SK-N-SH (cell line): ENCODE measurements at regions of chr11 and their contacts with region 1.

Region 1: DNA sequence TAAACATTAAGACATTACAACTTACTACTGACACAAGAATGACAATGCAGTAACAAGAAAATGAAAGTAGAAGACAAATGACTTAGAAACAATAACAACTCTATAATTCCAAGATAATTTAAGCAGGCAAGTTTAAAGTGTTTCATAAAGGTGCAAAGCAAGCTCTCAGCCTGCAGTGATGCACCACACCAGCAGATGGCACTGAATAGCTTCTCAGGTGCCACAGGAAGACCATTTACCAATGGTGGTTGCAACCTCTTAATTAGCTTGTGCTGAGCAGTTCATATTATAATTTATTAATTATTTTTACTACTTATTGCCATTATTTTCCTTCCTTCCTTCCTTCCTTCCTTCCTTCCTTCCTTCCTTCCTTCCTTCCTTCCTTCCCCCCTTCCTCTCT is 60.6 kb downstream of the NXPE2 start:
- DNase-seq: peak; percentile 44
- H3K4me3 ChIP-seq: no peak overlapping the region
- H3K27ac ChIP-seq: no peak overlapping the region
- H3K4me1 ChIP-seq: no peaks in the 10 kb centered on the region
- H3K27me3 ChIP-seq: no peaks in the 10 kb centered on the region
- CTCF ChIP-seq: peak; percentile 71
- EP300 ChIP-seq: no peak
- RAD21 ChIP-seq: peak; percentile 85

Region 2: GRCh38 chr11:114610984-114611944 is 127.7 kb before region 1 on chr11:
- CTCF ChIA-PET with region 1: no interaction called
- POLR2A ChIA-PET with region 1: no interaction called
- DNase-seq: no peak
- H3K4me3 ChIP-seq: no peak overlapping the region
- H3K27ac ChIP-seq: no peak overlapping the region
- H3K4me1 ChIP-seq: no peaks in the 10 kb centered on the region
- H3K27me3 ChIP-seq: no peaks in the 10 kb centered on the region
- CTCF ChIP-seq: peak; percentile 27; the same call in 1 of the 2 replicates
- EP300 ChIP-seq: no peak
- RAD21 ChIP-seq: no peak

Region 3: DNA sequence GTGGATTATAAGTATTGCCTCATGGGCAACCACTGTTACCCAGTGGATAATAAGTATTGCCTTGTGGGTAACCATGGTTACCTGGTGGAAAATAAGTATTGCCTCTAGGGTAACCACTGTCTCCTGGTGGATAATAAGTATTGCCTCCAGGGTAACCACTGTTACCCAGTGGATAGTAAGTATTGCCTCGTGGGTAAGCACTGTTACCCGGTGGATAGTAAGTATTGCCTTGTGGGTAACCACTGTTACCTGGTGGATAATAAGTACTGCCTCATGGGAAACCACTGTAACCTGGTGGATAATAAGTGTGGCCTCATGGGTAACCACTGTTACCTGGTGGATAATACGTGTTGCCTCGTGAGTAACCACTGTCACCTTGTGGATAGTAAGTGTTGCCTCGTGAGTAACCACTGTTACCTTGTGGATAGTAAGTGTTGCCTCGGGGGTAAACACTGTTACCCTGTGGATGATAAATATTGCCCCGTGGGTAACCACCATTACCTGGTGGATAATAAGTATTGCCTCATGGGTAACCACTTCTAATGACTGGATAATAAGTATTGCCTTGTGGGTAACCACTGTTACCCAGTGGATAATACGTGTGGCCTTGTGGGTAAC is 114.3 kb before region 1 on chr11:
- CTCF ChIA-PET with region 1: no interaction called
- POLR2A ChIA-PET with region 1: no interaction called
- DNase-seq: no peak
- H3K4me3 ChIP-seq: no peak overlapping the region
- H3K27ac ChIP-seq: no peak overlapping the region
- H3K4me1 ChIP-seq: no peaks in the 10 kb centered on the region
- H3K27me3 ChIP-seq: no peaks in the 10 kb centered on the region
- CTCF ChIP-seq: no peak
- EP300 ChIP-seq: no peak
- RAD21 ChIP-seq: no peak

Region 4: GRCh38 chr11:114713756-114714155 is 25.2 kb before region 1 on chr11:
- CTCF ChIA-PET with region 1: interaction called, 13 read pairs
- POLR2A ChIA-PET with region 1: no interaction called
- DNase-seq: no peak
- H3K4me3 ChIP-seq: no peak overlapping the region
- H3K27ac ChIP-seq: no peak overlapping the region
- H3K4me1 ChIP-seq: no peaks in the 10 kb centered on the region
- H3K27me3 ChIP-seq: no peaks in the 10 kb centered on the region
- CTCF ChIP-seq: no peak
- EP300 ChIP-seq: no peak
- RAD21 ChIP-seq: no peak

Region 5: DNA sequence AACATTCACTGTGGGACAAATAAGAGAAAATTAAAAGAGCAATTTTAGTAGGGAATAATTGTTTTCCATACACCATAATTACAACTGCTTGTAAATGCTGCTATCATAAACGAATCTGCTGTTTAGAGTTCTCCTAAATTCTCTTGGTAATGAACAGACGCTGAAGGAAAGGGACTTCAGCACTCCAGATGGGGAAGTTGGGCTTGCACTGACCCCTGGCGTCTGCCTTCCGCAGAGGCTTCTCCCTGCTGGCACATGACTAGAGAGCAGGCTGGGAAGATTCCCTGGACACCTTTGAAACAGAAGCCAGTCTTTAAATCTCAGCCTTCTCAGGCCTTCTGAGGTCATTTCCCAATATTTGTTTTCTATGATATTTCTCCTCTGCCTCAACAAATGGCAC is 23.5 kb after region 1 on chr11:
- CTCF ChIA-PET with region 1: interaction called, 13 read pairs
- POLR2A ChIA-PET with region 1: no interaction called
- DNase-seq: peak; percentile 77
- H3K4me3 ChIP-seq: no peak overlapping the region; a peak in 1 of 4 replicates
- H3K27ac ChIP-seq: no peak overlapping the region
- H3K4me1 ChIP-seq: peaks cover 0 to 4% of the 10 kb centered on the region in 2 experiments; a peak in 1 of 4 replicates
- H3K27me3 ChIP-seq: no peaks in the 10 kb centered on the region
- CTCF ChIP-seq: peak; percentile 62
- EP300 ChIP-seq: 0 out of 4 replicates have a peak, but pooled peaks of 1 of the 2 experiments have one; percentile 10
- RAD21 ChIP-seq: peak; percentile 88